Gastrocnemius medialis (tissue), 4 donors: ENCODE measurements at regions of chrX and their contacts with region 1.

Region 1: DNA sequence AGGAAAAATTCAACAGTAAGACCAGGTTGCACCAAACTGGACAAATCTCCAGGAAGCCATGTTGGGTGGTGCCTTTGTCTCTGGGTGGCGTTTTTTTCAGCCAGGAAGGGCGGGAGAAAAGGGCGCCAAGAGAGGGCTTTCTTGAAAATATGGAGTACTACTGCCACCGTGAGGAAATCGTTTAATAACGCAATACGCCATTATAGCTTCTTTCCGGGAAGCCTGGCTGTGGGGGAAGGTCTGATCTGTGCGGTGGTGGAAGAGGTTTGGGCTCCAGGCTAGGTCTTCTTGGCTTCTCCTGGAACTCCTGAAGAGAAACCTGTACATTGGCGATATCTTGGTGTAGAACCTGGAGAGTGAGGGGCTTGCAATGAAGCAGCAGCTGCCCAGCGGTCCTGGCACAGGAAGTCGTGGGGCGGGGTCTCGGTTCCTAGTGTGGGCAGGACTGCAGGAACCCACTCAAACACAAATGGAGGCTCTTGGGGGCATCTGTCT is 202.6 kb downstream of the OR13H1 start:
- DNase-seq: no peak
- ATAC-seq: no peak
- H3K4me3 ChIP-seq: peak overlapping the region in 2 of 4 donors; percentile 65 to 66
- H3K27ac ChIP-seq: peak overlapping the region in 2 of 4 donors; percentile 72 to 73
- H3K4me1 ChIP-seq: no peaks in the 10 kb centered on the region
- H3K27me3 ChIP-seq: no peaks in the 10 kb centered on the region
- CTCF ChIP-seq: peak in 3 of 5 experiments; percentile 45 to 67 (median 63)
- POLR2A ChIP-seq: no peak

Region 2: GRCh38 chrX:131277547-131278136 is 468.9 kb before region 1 on chrX:
- in situ Hi-C with region 1: no loop called
- intact Hi-C with region 1: no loop called
- DNase-seq: no peak
- ATAC-seq: no peak
- H3K4me3 ChIP-seq: no peak overlapping the region
- H3K27ac ChIP-seq: no peak overlapping the region
- H3K4me1 ChIP-seq: no peaks in the 10 kb centered on the region
- H3K27me3 ChIP-seq: no peaks in the 10 kb centered on the region
- CTCF ChIP-seq: no peak
- POLR2A ChIP-seq: no peak

Region 3: GRCh38 chrX:131821945-131822622 is 75.6 kb after region 1 on chrX:
- in situ Hi-C with region 1: no loop called
- intact Hi-C with region 1: loop called (anchors 2 kb)
- DNase-seq: no peak
- ATAC-seq: peak; percentile 36 to 42
- H3K4me3 ChIP-seq: peak overlapping the region in 2 of 4 donors; percentile 49 to 55
- H3K27ac ChIP-seq: peak overlapping the region; percentile 46 to 73 (median 60)
- H3K4me1 ChIP-seq: peaks cover 0 to 4% of the 10 kb centered on the region in 2 donors
- H3K27me3 ChIP-seq: no peaks in the 10 kb centered on the region
- CTCF ChIP-seq: peak in 3 of 5 experiments; percentile 51 to 77 (median 68)
- POLR2A ChIP-seq: no peak